ENCODE measurements at regions of chrX and their contacts with region 1.

Region 1: DNA sequence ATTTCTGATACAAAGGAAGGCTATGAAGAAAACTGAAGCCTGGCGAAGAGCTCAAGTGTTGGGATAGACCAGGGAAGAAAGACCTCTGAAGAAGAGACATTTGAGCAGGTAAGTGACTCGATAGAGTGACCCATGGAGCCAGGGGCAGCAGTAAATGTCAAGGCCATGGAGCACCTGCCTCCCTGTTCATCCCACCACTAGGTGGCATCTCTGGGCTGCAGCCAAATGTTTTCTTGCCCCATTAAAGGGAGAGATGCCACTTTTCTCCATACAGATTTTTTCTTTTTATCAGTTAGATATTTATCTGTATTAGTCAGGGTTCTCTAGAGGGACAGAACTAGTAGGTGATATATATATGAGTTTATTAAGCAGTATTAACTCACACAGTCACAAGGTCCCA is 4.9 kb upstream of the ZNF81 start:
- DNase-seq: peak; percentile 68
- ATAC-seq: no peak
- H3K4me3 Mint-ChIP-seq: no peak overlapping the region
- H3K27ac Mint-ChIP-seq: no peak overlapping the region
- H3K4me1 Mint-ChIP-seq: peaks cover 6% of the 10 kb centered on the region
- H3K27me3 Mint-ChIP-seq: no peaks in the 10 kb centered on the region

Region 2: GRCh38 chrX:47936224-47936939 is 104.6 kb after region 1 on chrX:
- CTCF ChIA-PET with region 1: no interaction called
- DNase-seq: no peak
- ATAC-seq: no peak
- H3K4me3 Mint-ChIP-seq: peak overlapping the region; percentile 45
- H3K27ac Mint-ChIP-seq: no peak overlapping the region
- H3K4me1 Mint-ChIP-seq: no peaks in the 10 kb centered on the region
- H3K27me3 Mint-ChIP-seq: no peaks in the 10 kb centered on the region

Region 3: GRCh38 chrX:48025561-48025960 is 193.8 kb after region 1 on chrX:
- CTCF ChIA-PET with region 1: interaction called, 33 read pairs
- DNase-seq: peak; percentile 49
- ATAC-seq: no peak
- H3K4me3 Mint-ChIP-seq: no peak overlapping the region
- H3K27ac Mint-ChIP-seq: peak overlapping the region; percentile 48
- H3K4me1 Mint-ChIP-seq: peaks cover 8% of the 10 kb centered on the region
- H3K27me3 Mint-ChIP-seq: no peaks in the 10 kb centered on the region